Gastrocnemius medialis (tissue), 4 donors: ENCODE measurements at regions of chr5 and their contacts with region 1.

Region 1: DNA sequence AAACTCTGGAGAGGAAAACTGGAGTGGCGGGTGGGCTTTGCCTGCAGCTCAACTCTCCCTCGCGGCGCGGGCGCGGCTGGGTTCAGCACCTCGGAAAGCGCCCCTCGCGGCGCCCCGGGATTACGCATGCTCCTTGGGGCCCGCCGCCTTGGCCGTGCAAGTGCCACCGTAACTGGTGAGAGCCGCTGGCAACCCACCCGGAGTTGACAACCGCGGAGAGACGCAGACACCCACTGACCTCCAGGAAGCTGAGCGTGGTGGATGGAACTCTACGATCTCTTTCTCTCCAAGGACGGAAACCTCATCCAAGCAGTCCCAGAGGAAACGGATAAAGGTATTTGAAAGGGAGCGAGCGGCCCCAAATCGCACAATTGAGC is 194 bp upstream of the RXFP3 start:
- DNase-seq: no peak
- ATAC-seq: no peak
- H3K4me3 ChIP-seq: peak overlapping the region; percentile 19 to 46 (median 31)
- H3K27ac ChIP-seq: no peak overlapping the region
- H3K4me1 ChIP-seq: peaks cover 0 to 7% of the 10 kb centered on the region in 2 donors
- H3K27me3 ChIP-seq: peaks cover 43 to 53% (median 48%) of the 10 kb centered on the region in 3 donors
- CTCF ChIP-seq: peak in 2 of 5 experiments; percentile 23 to 38
- POLR2A ChIP-seq: no peak

Region 2: GRCh38 chr5:33433303-33434240 is 502.4 kb before region 1 on chr5:
- in situ Hi-C with region 1: loop called in 2 of 4 experiments (anchors 25 kb)
- intact Hi-C with region 1: loop called (anchors 2 kb)
- DNase-seq: no peak
- ATAC-seq: no peak
- H3K4me3 ChIP-seq: no peak overlapping the region
- H3K27ac ChIP-seq: no peak overlapping the region
- H3K4me1 ChIP-seq: no peaks in the 10 kb centered on the region
- H3K27me3 ChIP-seq: no peaks in the 10 kb centered on the region
- CTCF ChIP-seq: no peak
- POLR2A ChIP-seq: no peak

Region 3: GRCh38 chr5:33781286-33781685 is 154.7 kb before region 1 on chr5:
- in situ Hi-C with region 1: no loop called
- intact Hi-C with region 1: no loop called
- DNase-seq: peak; percentile 25 to 30
- ATAC-seq: peak; percentile 49 to 80
- H3K4me3 ChIP-seq: no peak overlapping the region
- H3K27ac ChIP-seq: no peak overlapping the region
- H3K4me1 ChIP-seq: no peaks in the 10 kb centered on the region
- H3K27me3 ChIP-seq: no peaks in the 10 kb centered on the region
- CTCF ChIP-seq: no peak
- POLR2A ChIP-seq: no peak

Region 4: GRCh38 chr5:33969572-33970452 is 33.8 kb after region 1 on chr5:
- in situ Hi-C with region 1: no loop called
- intact Hi-C with region 1: no loop called
- DNase-seq: no peak
- ATAC-seq: no peak
- H3K4me3 ChIP-seq: no peak overlapping the region
- H3K27ac ChIP-seq: no peak overlapping the region
- H3K4me1 ChIP-seq: no peaks in the 10 kb centered on the region
- H3K27me3 ChIP-seq: no peaks in the 10 kb centered on the region
- CTCF ChIP-seq: peak in 2 of 5 experiments; percentile 42 to 48
- POLR2A ChIP-seq: no peak